ENCODE measurements at regions of chr13 and their contacts with region 1.

Region 1: DNA sequence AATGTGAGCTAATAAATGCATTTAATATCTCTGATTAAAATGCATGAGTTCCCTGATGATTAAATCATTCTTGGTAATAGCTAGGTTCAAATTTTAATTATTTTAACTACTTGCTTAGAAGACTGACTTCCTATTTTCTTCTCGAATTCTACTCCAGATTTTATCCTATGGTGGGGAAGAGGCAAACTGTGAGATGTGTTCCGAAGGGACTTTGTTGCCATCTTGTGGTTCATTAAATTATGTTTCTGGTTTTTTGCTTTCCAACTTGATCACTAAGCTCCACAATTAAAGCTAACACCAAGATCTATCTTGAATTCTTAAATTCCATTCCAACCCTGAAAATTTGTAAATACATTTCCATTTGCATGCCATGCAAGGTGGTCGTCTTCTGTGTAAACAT is 538.4 kb upstream of the PCDH20 start:
- DNase-seq: peak; percentile 67
- H3K4me3 ChIP-seq: no peak overlapping the region
- H3K27ac ChIP-seq: no peak overlapping the region
- H3K4me1 ChIP-seq: no peaks in the 10 kb centered on the region
- H3K27me3 ChIP-seq: no peaks in the 10 kb centered on the region
- CTCF ChIP-seq: peak; percentile 57

Region 2: GRCh38 chr13:60562081-60562780 is 1391.9 kb before region 1 on chr13:
- CTCF ChIA-PET with region 1: no interaction called
- POLR2A ChIA-PET with region 1: no interaction called
- intact Hi-C with region 1: no loop called
- DNase-seq: no peak
- H3K4me3 ChIP-seq: no peak overlapping the region
- H3K27ac ChIP-seq: no peak overlapping the region
- H3K4me1 ChIP-seq: peaks cover 11% of the 10 kb centered on the region
- H3K27me3 ChIP-seq: no peaks in the 10 kb centered on the region
- CTCF ChIP-seq: no peak

Region 3: DNA sequence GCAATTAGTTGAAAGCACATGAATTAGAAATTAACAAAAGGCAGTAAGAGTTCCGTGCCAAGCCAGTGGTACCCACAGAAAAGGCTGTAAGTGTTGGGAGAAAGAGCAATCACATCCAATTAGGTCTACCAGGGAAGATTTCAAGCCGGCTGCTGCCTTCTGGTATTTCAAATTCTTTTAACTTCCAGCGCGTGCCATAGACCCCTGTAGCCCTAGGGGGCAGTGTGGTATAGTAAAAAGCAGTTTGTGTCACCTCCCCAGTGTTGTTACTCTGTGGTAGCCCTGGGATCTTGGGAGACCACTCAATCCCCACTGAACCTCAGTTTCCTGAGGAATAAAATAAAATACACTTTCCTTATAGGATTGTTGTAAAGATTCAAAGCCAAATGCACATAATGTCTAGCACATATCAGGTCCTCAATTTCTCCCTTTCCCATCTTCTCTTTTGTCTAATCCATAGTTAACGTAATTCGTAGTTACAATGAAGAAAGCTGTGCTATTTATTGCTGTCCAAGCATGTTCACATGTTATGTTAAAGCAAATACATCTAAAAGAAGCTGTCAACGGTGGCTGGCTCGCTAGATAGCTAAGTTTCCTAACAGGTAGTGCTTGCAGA is 1326.9 kb before region 1 on chr13:
- CTCF ChIA-PET with region 1: no interaction called
- POLR2A ChIA-PET with region 1: no interaction called
- intact Hi-C with region 1: loop called (anchors 10 kb)
- DNase-seq: peak; percentile 79
- H3K4me3 ChIP-seq: no peak overlapping the region
- H3K27ac ChIP-seq: no peak overlapping the region
- H3K4me1 ChIP-seq: no peaks in the 10 kb centered on the region
- H3K27me3 ChIP-seq: peaks cover 8% of the 10 kb centered on the region
- CTCF ChIP-seq: peak; percentile 88

Region 4: DNA sequence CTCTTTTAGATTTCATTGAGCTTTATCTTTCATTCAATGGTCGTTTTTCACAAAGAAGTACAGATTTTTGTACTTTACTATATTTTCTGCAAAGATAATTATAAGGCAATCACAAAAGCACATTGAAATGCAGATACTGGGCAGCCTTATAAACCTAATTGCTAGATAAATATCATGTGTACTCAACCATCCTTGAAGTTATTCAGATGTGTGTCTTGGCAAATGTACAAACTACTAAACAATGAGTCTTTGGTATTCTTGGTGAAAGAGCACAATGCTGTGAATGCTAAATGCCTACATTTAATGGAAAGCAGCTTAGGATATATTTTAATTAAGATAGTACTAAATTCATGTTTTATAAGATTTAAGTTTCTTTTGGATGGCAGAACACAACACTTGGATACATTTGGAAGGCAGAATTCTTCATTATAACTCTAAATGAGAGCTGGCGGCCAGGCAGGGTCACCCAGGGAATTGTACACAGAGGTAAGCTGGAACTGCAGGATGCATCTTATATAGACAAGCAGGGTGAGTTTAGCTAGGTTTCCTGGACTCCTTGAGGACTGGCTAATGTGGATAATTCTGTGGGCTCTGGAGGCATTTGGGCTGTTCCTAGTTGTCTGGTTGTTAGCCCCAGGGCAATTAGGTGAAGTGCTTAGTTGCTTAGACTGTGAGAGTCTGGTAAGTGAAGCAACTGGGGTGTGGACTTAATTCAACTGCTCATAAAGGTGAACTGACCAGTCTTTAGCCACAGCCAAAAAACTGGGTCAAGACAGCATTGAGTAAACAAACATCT is 825.0 kb before region 1 on chr13:
- CTCF ChIA-PET with region 1: no interaction called
- POLR2A ChIA-PET with region 1: no interaction called
- intact Hi-C with region 1: loop called (anchors 5 kb)
- DNase-seq: peak; percentile 33
- H3K4me3 ChIP-seq: no peak overlapping the region
- H3K27ac ChIP-seq: no peak overlapping the region
- H3K4me1 ChIP-seq: peaks cover 7% of the 10 kb centered on the region
- H3K27me3 ChIP-seq: no peaks in the 10 kb centered on the region
- CTCF ChIP-seq: no peak

Region 5: GRCh38 chr13:61286148-61286745 is 667.8 kb before region 1 on chr13:
- CTCF ChIA-PET with region 1: no interaction called
- POLR2A ChIA-PET with region 1: no interaction called
- intact Hi-C with region 1: loop called (anchors 10 kb)
- DNase-seq: peak; percentile 61
- H3K4me3 ChIP-seq: no peak overlapping the region
- H3K27ac ChIP-seq: no peak overlapping the region
- H3K4me1 ChIP-seq: no peaks in the 10 kb centered on the region
- H3K27me3 ChIP-seq: no peaks in the 10 kb centered on the region
- CTCF ChIP-seq: peak; percentile 59

Region 6: GRCh38 chr13:62003452-62003851 is 49.4 kb after region 1 on chr13:
- CTCF ChIA-PET with region 1: no interaction called
- POLR2A ChIA-PET with region 1: no interaction called
- intact Hi-C with region 1: no loop called
- DNase-seq: no peak
- H3K4me3 ChIP-seq: no peak overlapping the region
- H3K27ac ChIP-seq: no peak overlapping the region
- H3K4me1 ChIP-seq: no peaks in the 10 kb centered on the region
- H3K27me3 ChIP-seq: no peaks in the 10 kb centered on the region
- CTCF ChIP-seq: no peak

Measured in A673 (cell line).